Posterior cingulate gyrus (tissue), 11 donors: ENCODE measurements at regions of chr1 and their contacts with region 1.

Region 1: GRCh38 chr1:221522529-221522940 is 219.4 kb downstream of the DUSP10 start:
- DNase-seq: no peak

Region 2: DNA sequence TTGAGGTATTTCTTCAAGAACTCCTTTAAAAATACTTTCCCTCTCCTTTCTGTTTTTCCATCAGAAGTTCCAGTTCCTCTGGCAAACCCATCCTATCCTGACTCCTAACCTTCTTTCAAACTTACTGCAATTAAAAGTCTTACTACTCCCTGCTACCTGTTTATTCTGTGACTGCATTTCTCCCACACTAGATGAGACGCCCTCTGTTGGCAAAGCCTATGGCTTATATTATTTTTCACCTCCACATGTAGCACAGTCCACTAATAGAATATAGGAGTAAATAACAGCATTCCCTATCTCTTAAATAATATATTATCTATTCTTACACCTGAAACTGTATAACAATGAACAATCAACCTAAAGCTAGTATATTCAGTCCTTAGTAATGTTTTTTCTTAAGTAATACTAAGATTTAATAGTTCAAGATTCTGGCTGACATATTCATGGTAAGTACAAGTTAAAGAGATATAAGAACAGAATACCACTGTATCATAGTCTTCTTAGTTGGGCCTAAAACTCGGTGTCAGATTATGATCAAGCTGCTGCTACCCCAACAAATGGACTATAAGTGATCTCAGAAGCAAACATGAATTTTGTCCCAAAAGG is 1305.0 kb before region 1 on chr1:
- intact Hi-C with region 1: loop called (anchors 5 kb)
- DNase-seq: no peak

Region 3: GRCh38 chr1:221567859-221568507 is 45.4 kb after region 1 on chr1:
- intact Hi-C with region 1: no loop called
- DNase-seq: no peak